ENCODE measurements at regions of chr5 and their contacts with region 1.

Region 1: DNA sequence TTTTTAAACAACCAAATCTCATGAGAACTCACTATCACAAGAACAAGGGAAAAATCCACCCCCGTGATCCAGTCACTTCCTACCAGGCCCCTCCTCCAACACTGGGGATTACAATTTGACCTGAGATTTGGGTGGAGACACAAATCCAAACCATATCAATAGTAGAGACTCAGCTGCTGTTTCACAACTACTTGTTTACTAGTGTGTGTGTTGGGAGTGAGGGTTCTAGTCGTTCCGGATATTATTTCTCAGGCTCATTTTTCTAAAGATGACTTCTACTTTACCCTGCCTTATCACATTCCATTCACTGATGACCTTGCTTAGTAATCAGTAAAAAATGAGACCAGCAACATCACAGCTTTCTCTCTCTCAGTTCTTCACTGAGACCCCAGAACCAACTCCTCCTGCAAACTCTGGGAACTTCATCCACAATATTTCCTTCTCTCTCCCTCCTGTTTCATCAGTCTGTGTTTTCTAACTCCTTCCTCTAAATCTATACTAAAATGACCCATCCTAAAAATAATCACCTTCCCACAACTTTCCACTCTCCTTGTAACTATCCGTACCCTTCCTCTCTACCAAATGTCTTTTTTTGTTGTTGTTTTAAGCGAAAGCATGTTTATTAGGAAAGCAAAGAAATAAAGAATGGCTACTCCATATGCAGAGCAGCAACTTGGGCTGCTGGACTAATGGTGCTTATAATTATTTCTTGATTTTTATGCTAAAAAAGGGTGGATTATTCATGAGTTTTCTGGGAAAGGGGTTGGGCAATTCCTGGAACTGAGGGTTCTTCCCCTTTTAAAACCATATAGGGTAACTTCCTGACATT is 121.5 kb upstream of the SPRY4 start:
- DNase-seq: peak in 1 of 2 donors; percentile 19
- ATAC-seq: peak in 7 of 8 donors; percentile 31 to 63 (median 44)
- H3K4me3 ChIP-seq: no peak overlapping the region
- H3K27ac ChIP-seq: peak overlapping the region in 9 of 10 donors; percentile 3 to 67 (median 46)
- H3K4me1 ChIP-seq: peaks cover 0 to 27% (median 19%) of the 10 kb centered on the region in 9 donors
- H3K27me3 ChIP-seq: no peaks in the 10 kb centered on the region
- CTCF ChIP-seq: no peak

Region 2: GRCh38 chr5:142156839-142157463 is 289.4 kb before region 1 on chr5:
- intact Hi-C with region 1: loop called in 1 of 10 experiments (anchors 5 kb)
- DNase-seq: no peak
- ATAC-seq: peak in 3 of 8 donors; percentile 46 to 54 (median 49)
- H3K4me3 ChIP-seq: no peak overlapping the region
- H3K27ac ChIP-seq: peak overlapping the region in 1 of 10 donors; percentile 14
- H3K4me1 ChIP-seq: peaks cover 3 to 22% (median 9%) of the 10 kb centered on the region in 9 donors
- H3K27me3 ChIP-seq: no peaks in the 10 kb centered on the region
- CTCF ChIP-seq: no peak

Region 3: GRCh38 chr5:142316051-142316450 is 130.3 kb before region 1 on chr5:
- intact Hi-C with region 1: loop called in 1 of 10 experiments (anchors 5 kb)
- DNase-seq: peak in 1 of 2 donors; percentile 55
- ATAC-seq: peak in 7 of 8 donors; percentile 38 to 62 (median 43)
- H3K4me3 ChIP-seq: peak overlapping the region in 5 of 10 donors; percentile 3 to 25 (median 10)
- H3K27ac ChIP-seq: peak overlapping the region in 8 of 10 donors; percentile 46 to 95 (median 80)
- H3K4me1 ChIP-seq: peaks cover 27 to 100% (median 83%) of the 10 kb centered on the region in 9 donors
- H3K27me3 ChIP-seq: peaks cover 0 to 6% (median 0%) of the 10 kb centered on the region in 7 donors
- CTCF ChIP-seq: no peak

Region 4: DNA sequence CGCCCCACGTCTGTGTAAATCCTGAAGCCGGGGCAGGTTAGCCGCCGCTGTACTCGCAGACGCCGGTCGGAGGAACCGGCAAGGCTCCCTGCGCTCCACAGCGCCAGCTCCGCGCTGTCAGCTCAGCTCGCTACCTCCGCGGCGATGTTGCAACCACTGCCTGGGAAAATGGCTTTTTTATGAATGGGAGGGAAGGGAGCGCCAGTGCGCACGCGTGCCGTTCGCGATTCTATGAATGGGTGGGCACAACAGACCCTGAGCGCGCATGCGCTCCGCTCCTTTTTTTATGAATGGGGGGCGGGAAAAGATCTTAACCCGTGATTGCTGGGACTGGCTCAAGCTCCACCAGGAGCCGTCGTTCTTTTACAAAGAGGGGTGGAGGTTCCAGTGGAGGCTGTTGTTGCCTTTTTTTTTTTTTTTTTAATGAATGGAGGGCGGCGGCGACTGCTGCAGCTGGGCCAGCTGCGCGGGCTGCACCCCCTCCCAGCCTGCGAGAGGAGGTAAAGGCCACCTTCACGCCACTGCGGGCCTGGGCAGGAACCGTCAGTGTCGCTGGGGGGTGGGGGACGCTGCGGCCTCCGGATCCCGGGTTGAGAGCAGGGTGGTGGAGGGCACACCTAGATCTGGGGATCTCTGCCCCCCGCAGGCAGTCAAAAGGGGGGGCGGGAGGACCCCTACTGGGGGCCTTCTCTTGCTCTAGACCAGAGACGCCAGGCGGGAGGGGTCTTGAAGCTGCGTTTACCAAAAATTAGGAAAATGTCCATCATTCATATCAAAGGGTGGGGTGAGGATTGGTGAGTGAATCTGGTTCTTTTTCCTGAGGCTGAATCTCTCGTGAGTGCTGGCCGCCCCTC is 121.2 kb before region 1 on chr5 and contains the start of gene SPRY4:
- intact Hi-C with region 1: loop called in 1 of 10 experiments (anchors 5 kb)
- DNase-seq: peak; percentile 94 to 95
- ATAC-seq: peak; percentile 75 to 89 (median 81)
- H3K4me3 ChIP-seq: peak within 1 kb of the TSS; percentile 63 to 99 (median 79)
- H3K27ac ChIP-seq: peak within 1 kb of the TSS; percentile 88 to 97 (median 92)
- H3K4me1 ChIP-seq: peaks cover 13 to 73% (median 56%) of the 10 kb centered on the region in 9 donors
- H3K27me3 ChIP-seq: peaks cover 0 to 76% (median 0%) of the 10 kb centered on the region in 7 donors
- CTCF ChIP-seq: peak in 1 of 9 donors; percentile 4
- total RNA-seq, gene SPRY4: 7.4 to 13.7 (median 10.1) TPM

Region 5: DNA sequence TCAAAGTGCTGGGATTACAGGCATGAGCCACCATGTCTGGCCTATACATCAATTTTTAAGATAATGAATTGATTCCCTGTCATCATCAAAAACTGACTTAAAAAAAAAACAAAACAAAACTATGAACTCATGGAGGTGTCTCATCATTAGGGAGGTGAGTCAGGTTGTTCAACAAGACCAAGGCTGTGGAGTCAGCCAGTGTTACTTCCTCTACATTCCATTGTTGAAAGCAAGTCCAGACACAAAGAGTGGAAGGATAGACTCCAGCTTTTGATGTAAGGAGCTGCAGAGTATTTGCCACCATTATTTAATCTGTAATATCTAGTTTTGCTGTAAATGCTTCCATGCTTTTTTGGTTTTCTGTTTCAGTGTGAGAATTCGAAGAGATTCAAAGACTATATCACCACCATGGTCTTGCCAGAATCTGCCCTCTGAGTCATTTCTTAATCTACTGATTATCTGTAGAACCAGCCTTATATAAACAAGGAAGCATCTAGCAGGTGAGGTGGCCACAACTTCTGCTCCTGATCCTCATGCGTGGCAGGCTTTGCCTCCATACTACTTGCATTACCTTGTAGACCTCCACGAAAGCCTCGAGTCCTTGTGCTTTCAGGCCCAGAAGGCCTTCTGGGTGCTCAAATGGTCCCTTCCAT is 83.4 kb after region 1 on chr5:
- intact Hi-C with region 1: loop called in 2 of 10 experiments (anchors 5 to 10 kb)
- DNase-seq: no peak
- ATAC-seq: no peak
- H3K4me3 ChIP-seq: no peak overlapping the region
- H3K27ac ChIP-seq: no peak overlapping the region
- H3K4me1 ChIP-seq: peaks cover 0 to 37% (median 17%) of the 10 kb centered on the region in 9 donors
- H3K27me3 ChIP-seq: no peaks in the 10 kb centered on the region
- CTCF ChIP-seq: no peak

Measured in heart right ventricle (tissue), 16 donors.